ENCODE measurements at regions of chr3 and their contacts with region 1.

Region 1: GRCh38 chr3:65439641-65440284 is 599.0 kb downstream of the MAGI1 start:
- DNase-seq: peak; percentile 42
- H3K4me3 ChIP-seq: no peak overlapping the region
- H3K27ac ChIP-seq: no peak overlapping the region
- H3K4me1 ChIP-seq: no peaks in the 10 kb centered on the region
- H3K27me3 ChIP-seq: no peaks in the 10 kb centered on the region
- CTCF ChIP-seq: peak in 3 of 4 experiments; percentile 37 to 62 (median 59)
- POLR2A ChIP-seq: no peak

Region 2: DNA sequence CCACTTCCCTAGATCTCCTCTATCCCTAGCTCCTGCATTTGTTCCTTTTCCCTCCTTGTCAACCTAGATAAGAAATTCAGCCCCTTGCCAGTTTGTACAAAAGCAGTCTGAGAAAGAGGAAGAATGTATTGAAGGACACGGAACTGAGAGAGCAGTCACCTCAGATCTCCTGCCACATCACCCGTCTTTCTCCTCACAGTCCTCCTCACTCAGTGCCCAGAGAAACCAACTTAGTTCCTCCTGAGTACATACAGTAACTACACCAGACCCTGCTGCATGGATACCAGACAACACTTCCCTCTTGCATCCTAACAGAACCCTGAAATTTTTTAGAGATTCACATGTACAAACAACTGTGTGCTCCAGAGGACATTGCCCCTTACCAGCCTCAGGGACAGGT is 188.4 kb before region 1 on chr3:
- intact Hi-C with region 1: no loop called
- DNase-seq: no peak
- H3K4me3 ChIP-seq: no peak overlapping the region
- H3K27ac ChIP-seq: no peak overlapping the region
- H3K4me1 ChIP-seq: no peaks in the 10 kb centered on the region
- H3K27me3 ChIP-seq: no peaks in the 10 kb centered on the region
- CTCF ChIP-seq: no peak
- POLR2A ChIP-seq: no peak

Region 3: GRCh38 chr3:65284961-65285360 is 154.8 kb before region 1 on chr3:
- intact Hi-C with region 1: no loop called
- DNase-seq: no peak
- H3K4me3 ChIP-seq: no peak overlapping the region
- H3K27ac ChIP-seq: no peak overlapping the region
- H3K4me1 ChIP-seq: no peaks in the 10 kb centered on the region
- H3K27me3 ChIP-seq: no peaks in the 10 kb centered on the region
- CTCF ChIP-seq: no peak
- POLR2A ChIP-seq: no peak

Region 4: GRCh38 chr3:65672871-65673815 is 233.4 kb after region 1 on chr3:
- intact Hi-C with region 1: loop called (anchors 10 kb)
- DNase-seq: peak; percentile 17
- H3K4me3 ChIP-seq: no peak overlapping the region
- H3K27ac ChIP-seq: no peak overlapping the region
- H3K4me1 ChIP-seq: no peaks in the 10 kb centered on the region
- H3K27me3 ChIP-seq: no peaks in the 10 kb centered on the region
- CTCF ChIP-seq: peak in 3 of 4 experiments; percentile 41 to 68 (median 43)
- POLR2A ChIP-seq: no peak

Region 5: GRCh38 chr3:65732051-65732935 is 292.5 kb after region 1 on chr3:
- intact Hi-C with region 1: loop called (anchors 10 kb)
- DNase-seq: peak; percentile 33
- H3K4me3 ChIP-seq: no peak overlapping the region
- H3K27ac ChIP-seq: no peak overlapping the region
- H3K4me1 ChIP-seq: no peaks in the 10 kb centered on the region
- H3K27me3 ChIP-seq: no peaks in the 10 kb centered on the region
- CTCF ChIP-seq: peak; percentile 27 to 63 (median 60)
- POLR2A ChIP-seq: no peak

Measured in prostate gland (tissue), 2 donors.